ENCODE measurements at regions of chr1 and their contacts with region 1.

Region 1: GRCh38 chr1:181479137-181479745 is 4.1 kb upstream of the CACNA1E start:
- DNase-seq: no peak
- H3K4me3 Mint-ChIP-seq: no peak overlapping the region
- H3K27ac Mint-ChIP-seq: no peak overlapping the region
- H3K4me1 Mint-ChIP-seq: peaks cover 7% of the 10 kb centered on the region
- H3K27me3 Mint-ChIP-seq: peaks cover 47% of the 10 kb centered on the region

Region 2: DNA sequence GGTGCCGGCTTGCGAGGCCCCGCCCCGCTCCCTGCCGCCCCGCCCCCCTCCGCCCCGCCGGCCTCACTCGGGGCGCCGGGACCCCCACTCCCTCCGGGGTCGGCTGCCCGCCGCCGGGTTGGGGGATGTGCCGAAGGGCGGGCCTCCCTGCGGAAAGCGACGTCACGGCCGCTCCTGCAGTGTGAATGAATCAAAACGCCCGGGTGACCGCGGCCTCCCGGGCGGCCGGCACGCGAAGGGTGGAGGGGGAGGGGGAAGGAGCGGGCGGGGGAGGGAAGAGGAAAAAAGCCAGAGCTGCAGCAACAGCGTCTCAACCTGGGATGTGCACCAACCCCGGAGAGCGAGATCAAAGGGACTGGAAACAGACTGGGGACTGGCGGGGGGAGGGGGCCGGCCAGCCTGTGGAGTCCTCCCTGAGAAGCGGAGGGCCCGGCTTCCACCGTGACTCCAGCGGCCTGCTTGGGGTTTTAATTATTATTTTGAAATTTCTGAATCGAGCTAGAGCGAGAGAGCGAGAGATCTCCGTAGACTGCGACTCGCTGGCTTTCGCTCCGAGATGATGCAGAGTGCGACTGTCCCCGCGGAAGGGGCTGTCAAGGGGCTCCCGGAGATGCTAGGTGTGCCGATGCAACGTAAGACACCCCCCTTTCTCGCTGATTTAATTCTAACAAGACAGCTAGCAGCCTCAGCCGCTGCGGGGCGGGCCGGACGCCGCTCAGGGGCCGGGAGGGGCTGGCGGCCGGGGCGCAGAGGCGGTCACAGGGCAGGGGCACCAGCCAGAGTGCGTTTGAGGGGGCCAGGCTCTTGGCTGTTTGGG is 1249.1 kb before region 1 on chr1 and contains the start of gene LHX4:
- intact Hi-C with region 1: loop called (anchors 10 kb)
- DNase-seq: no peak
- H3K4me3 Mint-ChIP-seq: peak within 1 kb of the TSS; percentile 66
- H3K27ac Mint-ChIP-seq: no peak within 1 kb of the TSS
- H3K4me1 Mint-ChIP-seq: peaks cover 13% of the 10 kb centered on the region
- H3K27me3 Mint-ChIP-seq: peaks cover 79% of the 10 kb centered on the region
- total RNA-seq, gene LHX4: not detected in 2 replicates

Region 3: DNA sequence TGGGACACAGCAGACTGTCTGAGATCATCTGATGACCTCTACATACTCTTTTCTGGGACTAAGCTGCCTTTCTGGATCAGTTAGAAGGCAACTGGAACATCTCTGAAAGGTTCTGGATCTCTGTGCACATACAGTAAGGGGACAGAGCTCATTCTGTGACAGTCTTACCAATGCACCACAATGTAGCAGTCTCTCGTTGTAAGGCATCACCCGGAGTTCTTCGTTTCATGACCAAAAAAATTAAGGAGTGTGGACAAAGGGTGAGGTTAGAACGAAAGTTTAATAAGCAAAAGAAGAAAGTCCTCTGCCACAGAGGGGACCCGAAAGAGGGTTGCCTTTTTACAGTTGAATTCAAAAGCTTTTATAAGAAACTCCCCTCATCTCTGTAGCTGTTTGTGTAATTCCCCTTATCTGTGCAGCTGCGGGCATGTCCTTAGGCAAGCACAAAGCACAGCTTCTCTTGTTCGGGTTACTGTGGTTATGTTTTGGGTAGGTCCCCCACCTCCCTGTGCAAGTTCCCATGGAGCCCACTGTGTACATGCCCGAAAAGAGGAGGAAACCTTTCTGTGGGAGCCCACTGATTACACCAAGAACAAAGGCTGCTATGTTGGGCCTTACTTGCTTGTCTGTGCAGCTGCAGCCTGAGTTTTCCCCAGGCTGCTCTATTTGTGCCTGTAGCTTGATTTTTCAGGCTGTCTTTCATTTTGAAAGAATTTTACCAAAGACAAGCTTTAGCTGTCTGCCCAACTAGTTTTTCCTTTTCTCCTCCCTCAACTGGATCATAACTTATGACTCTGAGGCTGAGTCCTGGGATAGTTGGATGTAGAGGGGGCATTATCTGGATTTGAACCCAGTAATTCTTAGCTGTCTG is 49.0 kb before region 1 on chr1:
- intact Hi-C with region 1: no loop called
- DNase-seq: no peak
- H3K4me3 Mint-ChIP-seq: no peak overlapping the region
- H3K27ac Mint-ChIP-seq: no peak overlapping the region
- H3K4me1 Mint-ChIP-seq: no peaks in the 10 kb centered on the region
- H3K27me3 Mint-ChIP-seq: peaks cover 40% of the 10 kb centered on the region

Region 4: GRCh38 chr1:181676269-181676668 is 197.0 kb after region 1 on chr1:
- intact Hi-C with region 1: loop called (anchors 10 kb)
- DNase-seq: no peak
- H3K4me3 Mint-ChIP-seq: no peak overlapping the region
- H3K27ac Mint-ChIP-seq: no peak overlapping the region
- H3K4me1 Mint-ChIP-seq: no peaks in the 10 kb centered on the region
- H3K27me3 Mint-ChIP-seq: peaks cover 15% of the 10 kb centered on the region

Region 5: DNA sequence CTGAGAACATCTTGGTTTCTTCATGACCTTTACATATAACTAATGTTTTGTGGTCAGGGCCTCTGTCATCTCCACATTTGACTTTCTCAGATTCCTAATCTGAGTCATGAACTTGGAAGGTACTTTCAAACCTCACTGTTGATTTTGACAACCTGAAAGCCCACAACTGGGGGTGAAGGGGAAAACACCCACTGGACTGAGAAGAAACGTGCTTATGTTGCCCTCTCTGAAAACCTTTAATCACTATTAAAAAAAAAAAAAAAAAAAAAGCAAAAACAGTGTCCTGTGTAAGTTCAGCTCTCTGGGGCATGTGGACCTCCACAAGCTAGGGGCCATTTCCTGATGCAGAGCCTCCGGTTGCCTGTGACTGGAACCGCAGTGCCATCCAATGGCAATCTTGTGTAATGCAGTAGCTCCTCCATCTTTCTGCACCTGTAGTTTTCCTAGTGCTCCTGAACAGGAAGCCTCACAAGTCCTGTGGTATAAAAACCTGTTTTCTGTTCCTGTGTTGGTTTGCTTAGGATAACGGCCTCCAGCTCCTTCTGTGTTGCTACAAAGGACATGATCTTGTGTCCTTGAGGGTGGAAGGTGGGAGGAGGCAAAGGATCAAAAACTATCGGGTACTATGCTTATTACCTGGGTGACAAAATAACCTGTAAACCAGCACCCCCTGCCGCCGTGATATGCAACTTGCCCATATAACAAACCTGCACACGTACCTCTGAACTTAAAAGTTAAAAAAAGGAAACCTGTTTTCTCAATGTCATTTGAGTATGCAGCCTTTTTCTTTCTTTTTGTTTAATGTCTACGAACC is 457.7 kb after region 1 on chr1:
- intact Hi-C with region 1: loop called (anchors 2 kb)
- DNase-seq: peak; percentile 17
- H3K4me3 Mint-ChIP-seq: no peak overlapping the region
- H3K27ac Mint-ChIP-seq: no peak overlapping the region
- H3K4me1 Mint-ChIP-seq: peaks cover 2% of the 10 kb centered on the region
- H3K27me3 Mint-ChIP-seq: peaks cover 3% of the 10 kb centered on the region

Region 6: DNA sequence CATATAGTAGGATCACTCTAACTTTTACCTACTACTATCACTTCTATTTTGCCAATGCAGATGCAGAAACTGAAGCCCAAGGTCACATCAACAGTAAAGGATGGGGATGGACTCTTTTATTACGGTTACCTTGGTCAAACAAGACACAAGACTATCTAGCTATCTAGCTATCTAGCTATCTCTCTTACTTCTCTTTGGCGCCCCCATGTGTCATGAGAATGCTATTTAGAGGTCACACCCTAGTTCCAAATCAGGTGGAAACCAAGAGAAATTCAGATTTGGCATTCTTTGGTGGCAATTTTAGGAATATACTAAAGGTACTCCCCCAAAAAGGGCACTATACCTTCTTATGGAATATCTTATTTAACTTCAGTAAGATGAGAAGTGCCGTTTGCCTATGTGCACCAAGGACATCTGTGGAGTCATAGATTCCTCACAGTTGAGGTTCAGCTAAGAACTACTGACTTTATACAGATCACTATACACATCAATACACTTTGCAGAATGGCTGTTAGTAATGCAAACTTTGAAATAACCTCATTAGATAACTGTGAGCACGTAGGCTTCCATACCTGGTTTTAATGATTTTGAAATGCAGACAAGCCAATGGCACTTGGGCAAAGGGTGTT is 575.6 kb after region 1 on chr1:
- intact Hi-C with region 1: loop called (anchors 2 kb)
- DNase-seq: peak; percentile 30
- H3K4me3 Mint-ChIP-seq: no peak overlapping the region
- H3K27ac Mint-ChIP-seq: no peak overlapping the region
- H3K4me1 Mint-ChIP-seq: peaks cover 26% of the 10 kb centered on the region
- H3K27me3 Mint-ChIP-seq: peaks cover 24% of the 10 kb centered on the region